ENCODE measurements at regions of chr2 and their contacts with region 1.

Region 1: DNA sequence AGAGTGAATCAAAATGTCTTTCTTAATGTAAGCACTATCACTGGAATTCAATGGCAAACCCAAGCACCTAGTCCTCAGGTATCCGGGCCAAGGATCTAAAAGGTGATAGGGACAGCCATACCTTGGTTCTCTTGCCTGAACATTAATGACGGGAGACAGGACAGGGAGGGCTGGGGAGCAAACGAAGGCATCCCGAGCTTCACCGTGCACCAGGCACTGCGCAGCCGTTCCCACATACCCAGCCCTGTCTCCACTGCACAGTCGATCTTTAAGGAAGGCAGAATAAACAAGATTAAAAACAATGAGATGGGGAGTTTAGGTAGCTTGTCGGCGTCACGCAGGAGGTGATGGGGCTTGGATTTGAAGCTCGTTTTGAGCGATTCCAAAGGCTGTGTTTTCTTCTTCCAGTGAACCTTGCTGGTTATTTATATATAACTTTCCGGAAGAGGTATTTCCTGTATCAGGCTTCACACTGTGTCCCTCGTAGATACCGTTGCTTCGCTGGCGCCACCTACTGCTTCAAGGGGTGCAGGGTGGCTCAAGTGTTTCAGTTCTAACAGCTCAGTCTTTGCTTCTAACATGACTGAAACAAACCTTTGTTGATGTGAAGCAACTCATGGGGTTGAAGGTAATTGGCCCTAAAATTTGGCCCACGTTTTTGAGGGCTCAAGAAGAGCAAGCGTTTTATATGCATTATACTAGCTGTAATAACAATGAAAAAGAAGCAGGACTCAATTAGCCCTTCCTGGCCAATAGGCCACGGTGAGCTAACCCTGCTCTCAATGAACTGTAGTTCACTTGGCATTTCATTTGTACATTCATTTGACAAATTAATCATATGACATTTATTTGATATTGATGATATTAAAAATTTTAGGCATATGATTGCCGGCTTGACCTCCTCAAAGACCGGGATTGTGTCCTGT is 77.4 kb downstream of the DCDC2C start:
- DNase-seq: peak; percentile 67

Region 2: DNA sequence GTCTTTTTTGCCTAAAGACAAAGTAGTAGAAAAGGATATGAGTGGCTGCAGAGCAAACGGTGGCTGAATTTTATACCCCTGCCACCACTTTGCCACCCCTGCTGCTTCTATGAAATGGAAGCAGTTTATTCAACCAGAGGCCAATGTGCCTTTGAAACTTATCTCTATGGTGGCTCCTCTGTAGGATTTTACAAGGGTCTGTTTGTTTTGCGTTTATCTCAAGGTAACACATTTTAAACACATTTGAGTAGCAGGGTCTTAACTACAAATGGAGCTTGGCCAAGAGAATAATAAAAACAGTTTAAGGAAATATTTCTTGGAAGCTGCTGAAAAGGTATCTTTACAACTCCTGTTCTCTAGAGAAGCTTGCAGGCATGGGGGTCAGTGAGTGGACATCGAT is 116.6 kb before region 1 on chr2:
- CTCF ChIA-PET with region 1: no interaction called
- POLR2A ChIA-PET with region 1: no interaction called
- DNase-seq: no peak

Region 3: GRCh38 chr2:3692381-3692780 is 88.4 kb before region 1 on chr2:
- CTCF ChIA-PET with region 1: no interaction called
- POLR2A ChIA-PET with region 1: no interaction called
- DNase-seq: peak; percentile 38

Region 4: DNA sequence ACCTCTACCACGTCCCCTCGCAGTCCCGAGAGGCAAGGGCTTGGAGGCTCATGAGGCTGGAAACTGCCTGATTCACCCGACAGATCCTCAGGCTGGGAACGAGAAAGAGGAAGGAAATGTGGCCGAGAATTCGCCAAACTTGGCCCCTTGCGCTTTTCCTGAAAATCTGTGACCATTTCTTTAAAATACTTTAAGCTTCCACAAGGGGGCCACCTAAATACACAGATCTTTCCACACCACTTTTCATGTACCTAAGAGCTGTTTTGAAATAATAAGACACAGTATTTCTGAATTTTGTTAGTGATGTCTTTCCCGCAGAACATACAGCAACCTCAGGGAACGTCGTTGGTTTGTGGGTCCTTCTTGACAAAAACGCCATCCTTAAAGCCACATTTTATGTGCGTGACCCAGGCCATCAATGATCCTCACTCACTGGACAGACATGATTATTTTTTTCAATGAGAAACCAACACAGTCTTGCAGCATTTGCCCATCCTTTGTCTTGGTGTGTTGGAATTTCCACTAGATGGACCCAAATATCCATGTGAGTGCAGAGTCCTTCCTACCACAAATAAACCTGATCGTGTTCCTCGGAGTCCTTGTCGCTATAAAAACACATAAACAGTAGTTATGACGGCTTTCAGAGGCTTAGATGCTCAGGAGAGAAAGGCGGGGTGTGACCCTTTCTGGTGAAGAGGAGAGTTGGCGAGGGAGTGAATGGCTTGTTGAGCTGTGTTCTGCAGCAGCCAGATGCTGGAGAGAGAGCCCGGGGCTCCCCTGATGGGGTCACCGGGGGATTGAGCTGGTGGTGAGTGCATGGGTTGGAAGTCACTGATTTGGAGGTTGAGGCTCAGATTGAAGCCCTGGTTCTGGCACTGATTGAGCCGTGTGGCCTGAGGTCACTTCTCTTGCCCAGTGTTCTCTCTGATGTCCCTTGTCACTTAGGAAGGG is 52.4 kb before region 1 on chr2:
- CTCF ChIA-PET with region 1: interaction called, 21 read pairs
- POLR2A ChIA-PET with region 1: no interaction called
- DNase-seq: peak; percentile 50

Region 5: DNA sequence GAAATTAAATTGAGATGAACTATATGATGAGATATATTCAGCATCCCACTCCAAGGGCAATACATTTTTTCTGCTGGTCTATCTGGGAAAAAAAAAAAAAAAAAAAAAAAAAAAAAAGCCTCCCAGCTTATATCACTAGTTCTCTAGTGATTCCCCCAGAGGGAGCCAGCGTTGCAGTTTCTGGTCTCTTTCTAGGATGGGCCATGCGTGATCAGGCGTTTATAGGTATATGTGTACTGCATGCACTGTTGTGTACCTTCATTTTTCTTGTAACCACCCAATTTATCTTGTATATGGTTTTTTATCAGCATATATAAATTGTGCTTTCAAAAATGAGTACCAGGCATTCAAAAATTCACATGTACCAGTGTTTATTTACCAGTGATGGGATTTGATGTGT is 42.3 kb before region 1 on chr2:
- CTCF ChIA-PET with region 1: no interaction called
- POLR2A ChIA-PET with region 1: no interaction called
- DNase-seq: peak; percentile 42